ENCODE measurements at regions of chr1 and their contacts with region 1.

Region 1: DNA sequence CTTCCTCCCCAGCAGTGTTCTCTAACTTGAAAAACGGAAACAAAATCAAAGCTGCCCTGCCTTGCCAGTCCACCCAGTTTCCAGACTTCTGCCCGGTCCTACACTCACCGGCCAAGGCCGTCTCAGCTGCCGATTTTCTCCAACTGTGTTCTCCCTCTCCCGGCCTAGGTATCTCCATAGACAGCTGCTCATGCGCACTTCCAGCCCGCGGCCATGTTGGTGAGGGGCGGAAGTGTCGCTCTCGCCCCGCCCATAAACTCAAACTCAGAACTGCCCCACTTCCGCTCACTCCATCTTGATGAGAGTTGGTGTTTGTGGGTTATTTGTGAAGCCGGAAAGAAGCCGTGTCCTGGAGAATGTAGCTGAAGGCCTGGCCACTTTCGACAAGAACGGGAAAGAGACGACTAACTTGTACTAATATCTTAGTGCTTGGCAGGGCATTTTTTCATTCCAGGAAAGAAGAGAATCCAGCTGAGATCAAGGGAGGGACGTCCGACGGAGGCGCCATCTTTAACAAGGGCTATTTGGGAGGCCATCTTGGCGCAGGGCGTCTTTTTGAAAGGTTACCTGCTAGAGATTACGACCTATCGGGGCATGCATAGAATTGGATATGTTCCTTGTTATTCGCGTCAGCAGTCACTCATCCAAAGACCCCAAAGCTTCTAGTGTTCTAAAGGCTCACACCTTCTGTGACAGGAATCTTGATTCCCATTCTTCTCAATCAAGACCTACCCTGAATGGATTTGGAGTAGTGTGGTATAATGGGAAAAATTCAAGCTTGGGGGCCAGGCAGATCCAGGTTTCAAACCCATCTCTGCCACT is at the start of gene USF1:
- DNase-seq: peak; percentile 84 to 94 (median 92)
- H3K4me3 ChIP-seq: peak within 1 kb of the TSS; percentile 62 to 98 (median 92)
- H3K27ac ChIP-seq: peak within 1 kb of the TSS; percentile 88 to 100 (median 98)
- H3K27me3 ChIP-seq: no peaks in the 10 kb centered on the region
- CTCF ChIP-seq: peak in 27 of 56 donors; percentile 5 to 53 (median 23)
- total RNA-seq, gene USF1: 46.0 to 87.0 (median 63.2) TPM

Region 2: DNA sequence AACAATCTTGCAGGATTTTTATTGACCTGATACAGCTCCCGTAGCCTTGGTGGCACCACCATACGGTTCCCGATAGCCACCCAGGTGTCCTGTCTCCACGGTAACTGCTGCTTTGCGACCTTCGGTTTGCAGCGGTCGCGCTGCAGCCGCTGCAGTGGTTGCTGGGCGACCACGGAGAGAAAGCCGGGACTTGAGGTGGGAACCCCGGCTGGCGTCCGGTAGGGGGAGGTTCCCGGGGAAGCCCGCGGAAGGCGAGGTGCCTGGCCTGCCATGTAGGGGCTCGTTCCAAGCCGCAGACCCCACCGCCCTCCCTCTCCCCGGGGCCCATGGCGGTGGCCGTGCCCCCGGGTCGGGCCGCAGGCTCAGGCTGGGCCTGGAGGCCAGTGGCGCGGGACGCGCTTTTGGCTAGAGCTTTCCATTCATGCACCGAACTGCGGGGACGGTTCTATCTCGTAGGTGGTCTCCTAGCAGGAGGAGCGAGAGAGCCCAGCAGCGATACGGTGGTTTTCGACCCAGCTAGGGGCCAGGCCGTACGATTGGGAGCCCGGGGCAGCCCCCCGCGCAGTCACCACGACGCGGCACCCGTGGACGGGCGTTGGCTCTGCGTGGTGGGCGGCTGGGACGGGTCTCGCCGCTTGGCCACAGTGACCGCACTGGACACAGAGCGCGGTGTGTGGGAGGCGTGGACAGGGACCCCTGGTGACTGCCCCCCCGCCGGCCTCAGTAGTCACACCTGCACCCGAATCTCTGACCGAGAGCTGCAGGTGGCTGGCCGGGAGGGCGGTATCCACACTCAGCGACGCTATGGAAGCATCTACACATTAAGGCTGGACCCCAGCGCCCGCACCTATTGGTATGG is 52.5 kb after region 1 on chr1 and contains the start of gene KLHDC9:
- intact Hi-C with region 1: loop called (anchors 5 kb)
- DNase-seq: peak; percentile 51 to 90 (median 80)
- H3K4me3 ChIP-seq: peak within 1 kb of the TSS; percentile 55 to 96 (median 78)
- H3K27ac ChIP-seq: peak within 1 kb of the TSS in 58 of 59 donors; percentile 36 to 93 (median 81)
- H3K27me3 ChIP-seq: no peaks in the 10 kb centered on the region
- CTCF ChIP-seq: peak in 18 of 56 donors; percentile 1 to 45 (median 7)
- total RNA-seq, gene KLHDC9: 15.1 to 54.9 (median 36.9) TPM

Region 3: GRCh38 chr1:161153679-161154426 is 107.9 kb after region 1 on chr1 and contains the start of gene UFC1:
- intact Hi-C with region 1: loop called (anchors 5 to 10 kb)
- DNase-seq: peak; percentile 69 to 92 (median 82)
- H3K4me3 ChIP-seq: peak within 1 kb of the TSS; percentile 55 to 96 (median 78)
- H3K27ac ChIP-seq: peak within 1 kb of the TSS; percentile 68 to 99 (median 97)
- H3K27me3 ChIP-seq: no peaks in the 10 kb centered on the region
- CTCF ChIP-seq: peak in 15 of 56 donors; percentile 4 to 55 (median 23)
- total RNA-seq, gene UFC1: 55.5 to 108 (median 76.8) TPM

Region 4: DNA sequence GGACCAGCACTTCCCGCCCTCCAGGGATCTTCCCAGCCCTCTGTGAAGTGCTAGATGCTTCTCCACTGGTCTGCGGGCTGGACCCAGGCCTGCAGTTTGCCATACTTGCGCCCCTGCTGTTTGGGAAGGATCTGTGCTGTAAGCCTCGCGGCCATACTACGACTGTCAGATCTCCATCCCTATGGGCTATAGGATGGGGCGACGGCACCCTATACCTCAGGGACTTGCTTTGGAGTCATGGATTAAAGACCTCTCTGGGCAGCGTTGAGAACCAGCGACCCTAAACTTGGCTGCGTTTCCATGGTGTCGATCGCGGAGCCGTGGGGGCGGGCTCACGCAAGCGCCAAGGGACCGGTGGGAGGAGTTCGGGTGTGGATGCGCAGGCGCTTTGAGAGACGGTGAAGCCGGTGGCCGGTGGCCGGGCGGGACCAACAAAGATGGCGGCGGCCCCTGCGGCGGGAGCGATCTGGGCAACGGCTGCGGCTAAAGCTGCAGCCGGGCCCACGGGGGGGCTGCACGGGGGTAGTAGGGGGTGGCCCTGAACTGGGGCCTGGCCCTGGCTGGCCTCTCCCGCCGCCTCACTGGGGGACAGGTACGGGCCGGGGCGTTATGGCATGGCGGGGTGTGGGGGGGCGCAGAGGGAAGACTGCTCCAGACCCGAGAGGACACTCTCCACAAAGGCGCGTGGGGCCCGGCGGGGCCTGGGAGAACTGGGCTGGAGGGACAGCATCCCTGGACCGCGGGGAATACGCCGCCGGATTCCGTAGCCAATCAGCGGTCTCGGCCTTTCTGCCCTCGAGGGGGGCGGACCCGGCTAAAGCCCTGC is 113.3 kb after region 1 on chr1 and contains the start of gene USP21:
- intact Hi-C with region 1: loop called (anchors 5 to 10 kb)
- DNase-seq: peak; percentile 91 to 96 (median 93)
- H3K4me3 ChIP-seq: peak within 1 kb of the TSS; percentile 56 to 98 (median 91)
- H3K27ac ChIP-seq: peak within 1 kb of the TSS; percentile 83 to 98 (median 94)
- H3K27me3 ChIP-seq: no peaks in the 10 kb centered on the region
- CTCF ChIP-seq: peak in 25 of 56 donors; percentile 7 to 54 (median 24)
- total RNA-seq, gene USP21: 24.5 to 66.1 (median 40.0) TPM

Measured in dorsolateral prefrontal cortex (tissue), 120 donors.